ENCODE measurements at regions of chr1 and their contacts with region 1.

Region 1: DNA sequence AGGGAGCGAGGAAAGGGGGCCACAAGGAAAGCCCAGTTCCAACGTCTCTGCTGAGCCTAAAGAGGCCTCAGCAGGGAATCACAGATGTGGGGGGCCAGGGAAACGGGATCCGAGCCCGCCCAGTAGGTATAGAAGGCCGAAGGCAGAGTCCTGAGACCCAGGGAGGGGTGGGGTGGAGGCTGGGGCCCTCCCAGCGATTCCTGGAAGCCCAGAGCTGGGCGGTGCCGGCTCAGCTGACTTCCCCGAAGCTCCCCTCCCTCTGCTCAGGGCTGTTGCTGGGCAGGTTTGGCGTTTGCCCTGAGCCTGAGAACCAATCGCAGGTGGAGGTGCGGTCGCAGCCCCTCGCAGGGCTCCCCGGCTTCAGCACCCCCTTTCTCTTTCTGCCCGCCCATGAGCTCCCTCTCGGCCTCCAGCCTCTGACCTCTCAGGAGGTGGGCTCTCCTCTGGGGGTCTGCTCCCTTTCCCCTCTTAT is 12.8 kb downstream of the ADAMTSL4 start:
- DNase-seq: peak; percentile 95
- H3K4me3 Mint-ChIP-seq: peak overlapping the region; percentile 96
- H3K27ac Mint-ChIP-seq: peak overlapping the region; percentile 100
- H3K4me1 Mint-ChIP-seq: peaks cover 63% of the 10 kb centered on the region
- H3K27me3 Mint-ChIP-seq: no peaks in the 10 kb centered on the region

Region 2: DNA sequence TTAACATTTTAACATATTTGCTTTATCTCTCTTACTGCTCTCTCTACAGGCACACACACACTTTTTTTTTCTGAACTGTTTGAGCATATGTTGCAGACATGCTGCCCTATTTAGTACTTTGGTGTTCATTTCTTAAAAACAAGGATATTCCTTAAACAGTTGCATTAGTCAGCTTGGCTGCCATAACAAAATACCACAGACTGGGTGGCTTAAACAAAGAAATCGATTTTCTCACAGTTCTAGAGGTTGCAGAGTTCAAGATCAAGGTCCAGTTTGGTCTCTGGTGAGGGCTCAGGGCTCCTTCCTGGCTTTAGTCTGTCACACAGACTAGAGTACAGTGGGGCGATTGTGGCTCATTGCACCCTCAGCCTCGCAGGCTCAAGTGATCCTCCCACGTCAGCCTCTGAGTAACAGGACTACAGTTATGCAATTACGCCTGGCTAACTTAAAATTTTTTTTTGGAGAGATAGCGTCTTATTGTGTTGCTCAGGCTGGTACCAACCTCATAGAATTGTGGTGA is 151.4 kb before region 1 on chr1:
- CTCF ChIA-PET with region 1: no interaction called
- DNase-seq: no peak
- H3K4me3 Mint-ChIP-seq: no peak overlapping the region
- H3K27ac Mint-ChIP-seq: no peak overlapping the region
- H3K4me1 Mint-ChIP-seq: peaks cover 4% of the 10 kb centered on the region
- H3K27me3 Mint-ChIP-seq: no peaks in the 10 kb centered on the region

Region 3: DNA sequence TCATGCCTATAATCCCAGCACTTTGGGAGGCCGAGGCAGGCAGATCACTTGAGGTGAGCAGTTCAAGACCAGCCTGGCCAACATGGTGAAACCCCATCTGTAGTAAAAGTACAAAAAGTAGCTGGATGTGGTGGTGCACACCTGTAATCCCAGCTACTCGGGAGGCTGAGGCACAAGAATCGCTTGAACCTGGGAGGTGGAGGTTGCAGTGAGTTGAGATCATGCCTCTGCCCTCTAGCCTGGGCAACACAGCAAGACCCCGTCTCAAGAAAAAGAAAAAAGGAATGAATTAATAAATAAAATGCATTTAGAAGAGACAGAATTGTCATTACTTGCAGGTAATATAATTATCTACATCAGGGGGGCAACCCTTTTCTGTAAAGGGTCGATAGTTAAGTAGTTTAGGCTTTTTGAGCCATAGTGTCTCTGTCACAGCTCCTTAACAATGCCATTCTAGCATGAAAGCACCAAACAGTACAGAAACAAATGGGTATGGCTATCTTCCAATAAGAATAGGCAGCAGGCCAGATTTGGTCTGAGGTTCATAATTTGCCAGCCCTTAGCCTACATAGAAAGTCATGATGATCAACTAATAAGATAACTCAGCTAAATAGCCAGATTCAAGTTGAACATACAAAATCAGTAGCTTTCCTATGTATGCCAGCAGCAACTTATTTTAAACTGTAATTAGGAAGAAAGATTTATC is 141.3 kb before region 1 on chr1:
- CTCF ChIA-PET with region 1: no interaction called
- DNase-seq: no peak
- H3K4me3 Mint-ChIP-seq: no peak overlapping the region
- H3K27ac Mint-ChIP-seq: no peak overlapping the region
- H3K4me1 Mint-ChIP-seq: peaks cover 7% of the 10 kb centered on the region
- H3K27me3 Mint-ChIP-seq: no peaks in the 10 kb centered on the region

Region 4: GRCh38 chr1:150578965-150579798 is 17.2 kb after region 1 on chr1 and contains the start of gene MCL1:
- CTCF ChIA-PET with region 1: interaction called, 221 read pairs
- DNase-seq: peak; percentile 94
- H3K4me3 Mint-ChIP-seq: peak within 1 kb of the TSS; percentile 96
- H3K27ac Mint-ChIP-seq: peak within 1 kb of the TSS; percentile 96
- H3K4me1 Mint-ChIP-seq: peaks cover 29% of the 10 kb centered on the region
- H3K27me3 Mint-ChIP-seq: no peaks in the 10 kb centered on the region

Region 5: GRCh38 chr1:150613061-150613920 is 51.3 kb after region 1 on chr1:
- CTCF ChIA-PET with region 1: interaction called, 56 read pairs
- DNase-seq: peak; percentile 49
- H3K4me3 Mint-ChIP-seq: no peak overlapping the region
- H3K27ac Mint-ChIP-seq: peak overlapping the region; percentile 88
- H3K4me1 Mint-ChIP-seq: peaks cover 61% of the 10 kb centered on the region
- H3K27me3 Mint-ChIP-seq: no peaks in the 10 kb centered on the region

Region 6: GRCh38 chr1:150621497-150622302 is 59.7 kb after region 1 on chr1:
- CTCF ChIA-PET with region 1: interaction called, 164 read pairs
- DNase-seq: peak; percentile 77
- H3K4me3 Mint-ChIP-seq: no peak overlapping the region
- H3K27ac Mint-ChIP-seq: peak overlapping the region; percentile 78
- H3K4me1 Mint-ChIP-seq: peaks cover 60% of the 10 kb centered on the region
- H3K27me3 Mint-ChIP-seq: no peaks in the 10 kb centered on the region

Region 7: DNA sequence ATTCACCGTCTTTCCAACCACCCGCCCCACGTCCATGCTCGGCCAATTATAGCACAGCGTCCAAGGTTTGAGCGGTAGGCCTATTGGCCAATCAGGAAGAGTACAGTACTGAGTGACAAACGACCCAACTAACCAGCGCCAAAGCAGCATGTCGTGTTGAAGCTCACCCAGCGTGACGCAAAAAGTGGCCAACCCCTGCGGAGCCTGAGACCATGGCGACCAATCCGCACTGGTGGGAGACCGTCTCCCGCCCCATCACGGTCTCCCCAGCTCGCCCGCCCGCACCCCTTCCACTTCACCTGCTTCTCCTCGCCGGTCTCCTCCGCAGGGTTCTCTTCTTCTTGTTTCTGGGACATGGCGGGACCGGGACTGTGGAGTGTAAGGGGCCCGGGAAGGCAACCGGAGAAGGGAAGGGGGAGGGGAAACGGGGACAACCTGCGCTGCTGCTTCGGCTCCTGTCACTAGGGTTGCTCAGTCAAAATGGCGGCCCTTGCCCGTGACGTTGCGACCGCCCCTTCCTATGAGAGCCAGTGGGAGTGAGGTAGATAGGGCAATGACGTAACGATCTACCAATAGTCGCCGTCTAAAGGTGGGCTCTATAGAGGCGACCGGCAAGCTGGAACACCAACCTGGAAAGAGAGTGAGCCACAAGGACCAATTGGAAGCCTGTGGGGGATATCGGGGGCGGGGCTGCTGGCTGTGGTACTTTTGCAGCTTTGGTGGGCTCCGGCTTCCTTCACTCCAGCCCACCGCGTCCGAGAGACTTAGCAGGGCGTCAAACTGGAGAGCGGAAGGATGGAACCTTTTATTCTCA is 67.3 kb after region 1 on chr1 and contains the start of gene ENSA:
- CTCF ChIA-PET with region 1: interaction called, 164 read pairs
- DNase-seq: peak; percentile 98
- H3K4me3 Mint-ChIP-seq: no peak within 1 kb of the TSS
- H3K27ac Mint-ChIP-seq: no peak within 1 kb of the TSS
- H3K4me1 Mint-ChIP-seq: peaks cover 21% of the 10 kb centered on the region
- H3K27me3 Mint-ChIP-seq: no peaks in the 10 kb centered on the region

Region 8: DNA sequence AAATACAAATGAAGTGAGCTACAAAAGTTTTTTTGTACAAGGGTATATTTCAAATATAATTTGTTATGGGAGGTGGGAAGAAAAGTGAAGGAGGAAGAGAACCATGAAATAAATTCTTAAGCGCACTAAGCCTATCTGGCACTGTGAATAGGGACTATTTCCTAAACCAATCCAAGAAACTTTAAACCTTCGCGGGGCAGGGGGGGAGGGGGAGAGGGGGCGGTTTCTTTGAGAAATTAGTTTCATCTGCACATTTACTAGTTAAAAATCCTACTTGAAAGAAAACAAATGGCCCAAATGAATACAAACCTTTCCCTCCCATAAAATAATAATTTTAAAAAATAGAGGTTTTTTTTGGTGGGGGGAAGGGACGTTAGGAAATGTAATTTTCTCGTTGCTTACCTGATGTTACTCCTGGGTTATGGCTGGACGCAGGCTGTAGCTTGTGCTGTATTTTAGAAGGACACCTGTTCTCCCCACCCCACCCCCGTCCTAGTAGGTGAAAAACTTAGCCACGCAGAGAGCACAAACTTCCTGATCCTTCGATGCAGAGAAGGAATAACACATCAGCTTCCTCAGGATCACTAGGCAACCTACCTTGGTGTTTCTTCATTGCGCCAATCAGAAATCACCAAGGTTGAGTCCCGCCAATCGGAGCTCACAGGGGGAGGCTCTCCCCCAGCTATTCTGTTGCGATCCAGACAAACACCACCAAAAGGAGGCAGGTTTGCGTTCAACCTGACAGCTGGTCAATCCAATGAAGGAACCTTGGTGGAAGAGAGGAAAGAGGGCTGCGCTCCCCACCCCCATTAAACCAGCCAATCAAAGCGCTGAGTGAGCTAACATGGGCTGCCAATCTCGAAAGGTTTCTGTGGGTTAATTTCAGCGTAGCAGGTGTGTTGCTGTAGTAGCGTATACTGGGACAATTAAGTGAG is 134.8 kb after region 1 on chr1 and contains the start of gene GOLPH3L:
- CTCF ChIA-PET with region 1: interaction called, 11 read pairs
- DNase-seq: peak; percentile 96
- H3K4me3 Mint-ChIP-seq: peak within 1 kb of the TSS; percentile 100
- H3K27ac Mint-ChIP-seq: peak within 1 kb of the TSS; percentile 88
- H3K4me1 Mint-ChIP-seq: peaks cover 26% of the 10 kb centered on the region
- H3K27me3 Mint-ChIP-seq: no peaks in the 10 kb centered on the region